ENCODE measurements at regions of chr19 and their contacts with region 1.

Region 1: DNA sequence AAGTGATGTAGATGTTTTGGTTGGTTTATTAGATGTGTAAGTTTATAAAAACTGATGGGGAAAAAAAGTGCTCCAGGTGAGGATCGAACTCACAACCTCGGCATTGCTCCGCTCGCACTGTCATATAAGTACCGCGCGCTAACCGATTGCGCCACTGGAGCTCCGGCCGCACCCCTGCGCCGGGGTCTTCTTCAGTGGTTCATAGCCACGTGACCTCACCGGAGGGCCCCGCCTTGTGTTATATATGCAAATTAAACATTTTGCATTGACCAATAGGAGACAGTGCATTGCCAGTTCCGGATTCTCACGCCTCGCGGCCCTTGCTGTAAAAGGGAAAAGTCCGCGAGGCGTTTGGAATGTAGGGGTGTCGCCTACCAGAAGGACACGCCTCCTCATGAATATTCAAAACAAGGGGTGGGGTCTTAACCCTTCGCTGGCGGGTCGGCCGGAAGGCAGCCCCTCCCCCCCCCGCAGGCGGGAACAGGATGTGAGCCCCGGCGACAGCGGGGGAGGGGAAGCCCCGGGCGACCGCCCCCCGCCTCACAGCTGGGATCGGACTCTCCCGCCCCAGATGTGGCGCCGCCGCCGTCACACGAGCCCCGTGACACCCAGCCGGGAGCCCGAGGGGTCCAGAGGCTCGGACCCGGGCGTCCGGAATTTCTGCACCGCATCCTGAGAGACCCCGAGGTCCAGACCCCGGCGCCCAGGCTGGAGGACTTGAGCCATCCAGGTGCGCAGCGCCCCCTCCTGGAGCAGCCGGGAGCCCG is at the start of gene PLEKHG2:
- DNase-seq: peak; percentile 100
- ATAC-seq: peak; percentile 67
- H3K4me3 ChIP-seq: peak within 1 kb of the TSS; percentile 42 to 55
- H3K27ac ChIP-seq: peak within 1 kb of the TSS; percentile 92
- H3K4me1 ChIP-seq: peaks cover 58% of the 10 kb centered on the region
- H3K27me3 ChIP-seq: no peaks in the 10 kb centered on the region
- CTCF ChIP-seq: no peak
- total RNA-seq, gene PLEKHG2: 1,988 TPM

Region 2: GRCh38 chr19:39125554-39126311 is 286.6 kb before region 1 on chr19 and contains the start of gene PAK4:
- CTCF ChIA-PET with region 1: interaction called, 4 read pairs
- POLR2A ChIA-PET with region 1: no interaction called
- in situ Hi-C with region 1: no loop called
- intact Hi-C with region 1: loop called (anchors 1 kb)
- DNase-seq: peak; percentile 99
- ATAC-seq: peak; percentile 95
- H3K4me3 ChIP-seq: peak within 1 kb of the TSS; percentile 63 to 90
- H3K27ac ChIP-seq: peak within 1 kb of the TSS; percentile 89
- H3K4me1 ChIP-seq: peaks cover 46% of the 10 kb centered on the region
- H3K27me3 ChIP-seq: no peaks in the 10 kb centered on the region
- CTCF ChIP-seq: no peak
- total RNA-seq, gene PAK4: 311 TPM

Region 3: DNA sequence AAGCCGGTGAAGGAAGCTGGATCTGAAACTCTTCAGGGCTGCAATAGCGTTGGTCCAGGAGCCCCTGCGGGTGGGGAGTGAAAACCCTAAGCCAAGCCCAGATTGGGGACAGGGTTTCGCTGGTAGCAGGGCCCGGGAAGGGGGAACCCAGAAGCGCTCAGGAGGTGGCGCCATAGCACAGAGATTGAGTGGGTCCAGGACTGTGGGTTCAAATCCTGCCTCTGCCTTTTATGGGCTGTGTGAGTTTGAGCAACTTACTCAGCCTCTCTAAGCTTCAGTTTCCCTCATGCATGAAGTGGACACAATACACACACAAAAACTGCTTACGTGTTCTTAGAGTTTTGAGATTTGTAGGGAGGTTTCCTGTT is 199.9 kb before region 1 on chr19:
- CTCF ChIA-PET with region 1: interaction called, 4 read pairs
- POLR2A ChIA-PET with region 1: no interaction called
- in situ Hi-C with region 1: no loop called
- intact Hi-C with region 1: loop called (anchors 5 kb)
- DNase-seq: peak; percentile 75
- ATAC-seq: peak; percentile 90
- H3K4me3 ChIP-seq: no peak overlapping the region
- H3K27ac ChIP-seq: no peak overlapping the region
- H3K4me1 ChIP-seq: no peaks in the 10 kb centered on the region
- H3K27me3 ChIP-seq: no peaks in the 10 kb centered on the region
- CTCF ChIP-seq: no peak

Region 4: DNA sequence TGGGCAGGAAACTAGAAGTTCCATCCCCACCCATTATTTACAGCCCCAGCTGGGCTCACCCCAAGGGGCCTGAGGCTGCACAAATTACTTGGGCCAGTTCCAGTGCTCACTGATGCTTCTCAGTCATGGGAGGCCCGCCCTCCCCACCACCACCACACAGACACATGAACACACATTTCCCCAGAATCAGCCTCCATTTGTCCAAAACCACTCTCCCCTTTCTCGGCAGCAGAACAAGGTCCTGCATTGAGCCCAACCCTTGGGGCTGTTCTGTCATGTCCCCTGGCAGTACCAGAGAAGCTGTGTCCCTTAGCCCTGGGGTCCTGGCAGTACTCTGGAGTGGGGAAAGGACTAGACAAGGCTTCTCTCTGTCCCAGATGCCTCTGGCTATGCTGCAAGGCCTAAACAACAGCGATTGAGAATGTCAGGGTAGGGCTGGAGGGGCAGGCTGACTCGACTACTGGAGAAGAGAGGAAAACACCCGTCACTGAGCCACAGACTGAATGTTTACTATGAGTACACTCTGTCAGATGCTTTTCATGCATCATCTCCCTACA is 48.3 kb before region 1 on chr19:
- CTCF ChIA-PET with region 1: interaction called, 13 read pairs
- POLR2A ChIA-PET with region 1: interaction called, 7 read pairs
- in situ Hi-C with region 1: no loop called
- intact Hi-C with region 1: no loop called
- DNase-seq: no peak
- ATAC-seq: peak; percentile 1; the same call in 1 of the 2 replicates
- H3K4me3 ChIP-seq: no peak overlapping the region
- H3K27ac ChIP-seq: no peak overlapping the region
- H3K4me1 ChIP-seq: peaks cover 5% of the 10 kb centered on the region; the same call in 1 of the 2 replicates
- H3K27me3 ChIP-seq: no peaks in the 10 kb centered on the region
- CTCF ChIP-seq: no peak

Region 5: GRCh38 chr19:39423258-39424086 is 11.2 kb after region 1 on chr19:
- CTCF ChIA-PET with region 1: interaction called, 147 read pairs
- POLR2A ChIA-PET with region 1: interaction called, 230 read pairs
- in situ Hi-C with region 1: no loop called
- intact Hi-C with region 1: no loop called
- DNase-seq: no peak
- ATAC-seq: no peak
- H3K4me3 ChIP-seq: no peak overlapping the region
- H3K27ac ChIP-seq: peak overlapping the region; percentile 3
- H3K4me1 ChIP-seq: peaks cover 24% of the 10 kb centered on the region
- H3K27me3 ChIP-seq: no peaks in the 10 kb centered on the region
- CTCF ChIP-seq: no peak

Region 6: DNA sequence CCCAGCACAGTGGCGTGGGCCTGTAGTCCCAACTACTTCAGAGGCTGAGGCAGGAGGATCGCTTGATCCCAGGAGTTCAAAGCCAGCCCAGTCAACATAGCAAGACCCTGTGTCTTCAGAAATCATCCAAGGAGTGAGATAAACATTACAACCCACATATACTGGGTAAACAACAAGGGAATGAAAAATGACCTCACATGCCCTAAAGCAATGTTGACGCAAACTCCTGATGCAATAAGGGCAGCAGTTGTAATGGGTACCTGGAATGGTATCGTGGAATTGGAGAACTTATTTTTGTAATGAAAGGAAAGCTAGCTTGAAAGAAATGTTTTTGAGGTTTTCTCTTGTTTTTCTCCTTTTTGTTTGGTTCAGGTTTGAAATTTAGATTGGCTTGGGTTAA is 218.9 kb after region 1 on chr19:
- CTCF ChIA-PET with region 1: no interaction called
- POLR2A ChIA-PET with region 1: no interaction called
- in situ Hi-C with region 1: no loop called
- intact Hi-C with region 1: no loop called
- DNase-seq: peak; percentile 56
- ATAC-seq: peak; percentile 47
- H3K4me3 ChIP-seq: no peak overlapping the region
- H3K27ac ChIP-seq: no peak overlapping the region
- H3K4me1 ChIP-seq: no peaks in the 10 kb centered on the region
- H3K27me3 ChIP-seq: peaks cover 60% of the 10 kb centered on the region
- CTCF ChIP-seq: no peak; the same call in 1 of the 2 replicates

Region 7: DNA sequence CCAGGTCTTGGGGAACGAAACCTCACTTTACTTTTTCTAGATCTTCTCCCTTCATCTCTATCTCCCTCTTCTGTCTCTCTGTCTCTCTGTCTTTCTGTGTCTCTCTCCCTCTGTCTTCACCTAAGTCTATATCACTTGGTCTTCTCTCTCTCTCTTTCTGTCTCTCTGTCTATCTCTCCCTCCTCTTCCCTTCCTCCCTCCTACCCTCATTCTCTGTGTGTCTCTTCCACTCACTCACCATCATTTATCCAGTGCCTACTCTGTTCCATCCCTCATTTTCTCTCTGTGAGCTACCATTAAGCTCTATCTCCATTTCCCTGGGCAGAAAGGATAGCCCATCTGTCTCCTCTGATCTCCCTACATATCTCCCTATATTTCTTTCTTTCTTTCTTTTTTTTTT is 466.1 kb after region 1 on chr19:
- CTCF ChIA-PET with region 1: no interaction called
- POLR2A ChIA-PET with region 1: no interaction called
- in situ Hi-C with region 1: no loop called
- intact Hi-C with region 1: no loop called
- DNase-seq: no peak
- ATAC-seq: no peak
- H3K4me3 ChIP-seq: no peak overlapping the region
- H3K27ac ChIP-seq: no peak overlapping the region
- H3K4me1 ChIP-seq: no peaks in the 10 kb centered on the region
- H3K27me3 ChIP-seq: no peaks in the 10 kb centered on the region
- CTCF ChIP-seq: no peak

Region 8: DNA sequence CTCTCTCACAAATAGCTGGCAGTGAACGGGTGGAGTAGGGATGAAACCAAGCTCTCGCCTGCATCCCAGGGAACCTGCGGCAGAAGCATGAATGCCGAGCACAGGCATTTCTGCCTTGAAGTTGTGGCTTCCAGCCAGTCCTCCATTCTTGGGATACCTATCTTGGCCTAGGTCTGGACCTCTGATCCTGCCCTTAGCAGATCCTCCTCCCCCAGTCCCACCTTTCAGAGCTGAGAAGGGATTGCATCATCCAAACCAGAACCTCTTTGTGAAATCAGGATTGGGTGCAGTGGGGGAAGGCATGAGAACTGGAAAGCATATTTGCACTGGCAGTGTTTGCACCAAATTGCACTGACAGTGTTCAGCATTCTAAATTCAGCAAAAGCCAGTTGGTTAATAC is 672.7 kb after region 1 on chr19:
- CTCF ChIA-PET with region 1: no interaction called
- POLR2A ChIA-PET with region 1: interaction called, 14 read pairs
- in situ Hi-C with region 1: no loop called
- intact Hi-C with region 1: no loop called
- DNase-seq: no peak
- ATAC-seq: peak; percentile 47
- H3K4me3 ChIP-seq: peak overlapping the region in 1 of 2 experiments; percentile 0; a peak in 2 of 4 replicates
- H3K27ac ChIP-seq: peak overlapping the region; percentile 40
- H3K4me1 ChIP-seq: peaks cover 20% of the 10 kb centered on the region
- H3K27me3 ChIP-seq: no peaks in the 10 kb centered on the region
- CTCF ChIP-seq: no peak

Measured in Panc1 (cell line).